ENCODE measurements at regions of chr19 and their contacts with region 1.

Region 1: GRCh38 chr19:33819880-33820781 is 23.5 kb downstream of the KCTD15 start:
- DNase-seq: peak; percentile 85 to 92 (median 86)
- ATAC-seq: peak; percentile 70 to 93 (median 86)
- H3K4me3 ChIP-seq: peak overlapping the region; percentile 4 to 63 (median 50)
- H3K27ac ChIP-seq: peak overlapping the region; percentile 77 to 96 (median 84)
- H3K4me1 ChIP-seq: peaks cover 0 to 56% (median 25%) of the 10 kb centered on the region in 12 donors
- H3K27me3 ChIP-seq: no peaks in the 10 kb centered on the region
- CTCF ChIP-seq: peak in 3 of 12 donors; percentile 7 to 14 (median 8)
- POLR2A ChIP-seq: peak in 1 of 2 donors; percentile 21

Region 2: GRCh38 chr19:33883859-33884519 is 63.9 kb after region 1 on chr19:
- intact Hi-C with region 1: loop called in 1 of 10 experiments (anchors 5 kb)
- DNase-seq: peak in 4 of 5 donors; percentile 45 to 66 (median 46)
- ATAC-seq: peak in 3 of 4 donors; percentile 74 to 83 (median 80)
- H3K4me3 ChIP-seq: peak overlapping the region in 6 of 12 donors; percentile 2 to 25 (median 20)
- H3K27ac ChIP-seq: peak overlapping the region in 11 of 12 donors; percentile 53 to 85 (median 67)
- H3K4me1 ChIP-seq: peaks cover 0 to 36% (median 19%) of the 10 kb centered on the region in 12 donors
- H3K27me3 ChIP-seq: no peaks in the 10 kb centered on the region
- CTCF ChIP-seq: no peak
- POLR2A ChIP-seq: no peak

Region 3: GRCh38 chr19:33905937-33906576 is 85.9 kb after region 1 on chr19:
- intact Hi-C with region 1: loop called in 5 of 10 experiments (anchors 2 to 5 kb)
- DNase-seq: peak; percentile 83 to 86 (median 86)
- ATAC-seq: peak; percentile 68 to 94 (median 91)
- H3K4me3 ChIP-seq: peak overlapping the region; percentile 22 to 67 (median 58)
- H3K27ac ChIP-seq: peak overlapping the region; percentile 72 to 95 (median 88)
- H3K4me1 ChIP-seq: peaks cover 0 to 31% (median 13%) of the 10 kb centered on the region in 12 donors
- H3K27me3 ChIP-seq: peaks cover 0 to 42% (median 7%) of the 10 kb centered on the region in 9 donors
- CTCF ChIP-seq: no peak
- POLR2A ChIP-seq: no peak

Measured in heart left ventricle (tissue), 16 donors.